ENCODE measurements at regions of chr11 and their contacts with region 1.

Region 1: GRCh38 chr11:110287537-110287936 is 8.9 kb downstream of the RDX start:
- DNase-seq: no peak
- H3K4me3 Mint-ChIP-seq: no peak overlapping the region
- H3K27ac Mint-ChIP-seq: no peak overlapping the region
- H3K4me1 Mint-ChIP-seq: peaks cover 44% of the 10 kb centered on the region
- H3K27me3 Mint-ChIP-seq: no peaks in the 10 kb centered on the region

Region 2: GRCh38 chr11:110195845-110196754 is 91.4 kb before region 1 on chr11:
- intact Hi-C with region 1: no loop called
- DNase-seq: no peak
- H3K4me3 Mint-ChIP-seq: no peak overlapping the region
- H3K27ac Mint-ChIP-seq: no peak overlapping the region
- H3K4me1 Mint-ChIP-seq: peaks cover 15% of the 10 kb centered on the region
- H3K27me3 Mint-ChIP-seq: peaks cover 34% of the 10 kb centered on the region

Region 3: DNA sequence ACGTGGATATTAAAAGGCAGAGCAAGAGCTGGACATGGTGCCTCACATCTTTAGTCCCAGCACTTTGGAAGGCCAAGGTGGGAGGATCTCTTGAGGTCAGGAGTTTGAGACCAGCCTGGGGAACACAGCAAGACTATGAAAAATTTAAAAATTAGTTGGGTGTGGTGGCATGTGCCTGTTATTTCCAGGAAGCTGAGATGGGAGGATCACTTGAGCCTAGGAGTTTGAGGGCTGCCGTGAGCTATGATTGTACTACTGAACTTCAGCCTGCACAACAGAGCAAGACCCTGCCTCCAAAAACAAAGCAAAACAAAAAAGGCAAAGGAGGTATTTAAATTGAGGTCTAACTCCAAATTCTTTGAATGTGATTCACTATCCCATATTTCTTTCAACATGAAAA is 14.6 kb before region 1 on chr11:
- intact Hi-C with region 1: loop called (anchors 2 kb)
- DNase-seq: no peak
- H3K4me3 Mint-ChIP-seq: no peak overlapping the region
- H3K27ac Mint-ChIP-seq: no peak overlapping the region
- H3K4me1 Mint-ChIP-seq: peaks cover 46% of the 10 kb centered on the region
- H3K27me3 Mint-ChIP-seq: no peaks in the 10 kb centered on the region

Measured in activated T-helper 1 cell treated with anti-CD3 and anti-CD28 coated beads, Interleukin-12 subunit alpha, Interleukin-12 subunit beta, Interleukin-2, Interleukin-4 antibody, amounts not matched to agents 30 ng/mL and 10 ng/mL and 1 ng/mL, durations not matched to agents 14 hours and 24 hours and 36 hours (primary cell).